GM10248 (cell line): ENCODE measurements at regions of chr13 and their contacts with region 1.

Region 1: GRCh38 chr13:75841905-75842304 is 205.8 kb downstream of the LMO7 start:
- DNase-seq: no peak
- CTCF ChIP-seq: no peak

Region 2: GRCh38 chr13:75226733-75227435 is 615.0 kb before region 1 on chr13:
- CTCF ChIA-PET with region 1: no interaction called
- POLR2A ChIA-PET with region 1: no interaction called
- DNase-seq: no peak
- CTCF ChIP-seq: no peak

Region 3: DNA sequence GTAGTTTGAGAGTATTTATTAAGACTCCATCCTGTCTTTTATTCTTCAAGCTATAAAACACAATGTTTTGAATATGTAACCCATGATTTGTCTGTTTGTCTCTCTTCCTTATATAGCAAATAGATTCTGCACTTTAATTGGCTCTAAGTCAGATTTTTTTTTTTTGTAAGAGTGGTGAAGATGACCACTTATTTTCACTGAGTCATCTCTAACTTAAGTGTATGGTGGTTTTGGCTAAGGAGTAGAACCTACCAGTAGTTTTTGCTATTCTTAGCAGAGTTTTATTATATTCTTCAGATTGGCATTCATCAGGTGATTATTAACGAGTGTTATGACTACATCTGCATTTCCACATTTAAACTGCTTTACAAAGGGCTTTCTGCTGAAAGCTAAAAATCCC is 11.1 kb before region 1 on chr13:
- CTCF ChIA-PET with region 1: interaction called, 14 read pairs
- POLR2A ChIA-PET with region 1: no interaction called
- DNase-seq: no peak
- CTCF ChIP-seq: no peak